Right ventricle myocardium superior (tissue), 1 donor: ENCODE measurements at regions of chr13 and their contacts with region 1.

Region 1: GRCh38 chr13:97109841-97110492 is 112.2 kb upstream of the MBNL2 start:
- DNase-seq: peak; percentile 95
- ATAC-seq: peak; percentile 98

Region 2: DNA sequence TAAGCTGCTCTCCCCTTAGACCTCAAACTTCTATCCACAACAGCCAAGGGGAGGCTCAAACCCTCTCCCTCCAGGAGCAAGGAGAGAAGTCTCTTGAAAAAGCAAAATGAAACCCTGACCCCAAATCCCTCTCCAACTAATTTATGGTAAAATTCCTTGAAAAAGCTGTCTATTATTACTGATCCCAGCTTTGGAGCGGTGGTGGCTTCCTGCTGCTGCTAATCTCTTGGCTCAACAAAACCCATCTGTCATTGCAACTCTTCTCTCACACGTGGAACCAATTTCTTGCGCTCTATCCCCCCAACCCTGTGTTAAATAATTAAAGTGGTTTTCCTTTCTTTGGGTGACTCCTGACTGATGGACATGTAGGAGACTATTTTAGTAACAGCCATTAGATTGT is 51.6 kb before region 1 on chr13:
- intact Hi-C with region 1: no loop called
- DNase-seq: no peak
- ATAC-seq: no peak

Region 3: DNA sequence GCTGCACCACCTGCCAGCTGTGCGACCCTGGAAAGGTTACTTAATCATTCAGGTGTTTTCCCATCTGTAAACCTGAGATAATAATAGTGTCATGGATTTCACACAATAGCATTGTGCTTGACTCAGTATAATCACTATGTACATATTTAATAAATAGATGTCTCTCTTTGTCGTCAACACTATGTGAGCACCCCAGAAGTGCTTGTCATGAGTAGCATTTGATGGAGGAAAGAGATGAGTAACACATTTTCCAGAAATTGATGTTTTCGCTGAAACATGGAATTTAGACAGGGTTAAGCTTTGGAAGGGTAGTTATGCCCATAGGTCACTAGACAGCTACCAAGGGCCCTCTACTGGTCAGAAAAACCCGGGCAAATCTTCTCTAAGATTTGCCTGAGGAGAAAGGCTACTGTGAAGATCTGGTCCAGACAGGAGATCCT is 102.7 kb after region 1 on chr13:
- intact Hi-C with region 1: loop called (anchors 2 kb)
- DNase-seq: no peak
- ATAC-seq: peak; percentile 87

Region 4: DNA sequence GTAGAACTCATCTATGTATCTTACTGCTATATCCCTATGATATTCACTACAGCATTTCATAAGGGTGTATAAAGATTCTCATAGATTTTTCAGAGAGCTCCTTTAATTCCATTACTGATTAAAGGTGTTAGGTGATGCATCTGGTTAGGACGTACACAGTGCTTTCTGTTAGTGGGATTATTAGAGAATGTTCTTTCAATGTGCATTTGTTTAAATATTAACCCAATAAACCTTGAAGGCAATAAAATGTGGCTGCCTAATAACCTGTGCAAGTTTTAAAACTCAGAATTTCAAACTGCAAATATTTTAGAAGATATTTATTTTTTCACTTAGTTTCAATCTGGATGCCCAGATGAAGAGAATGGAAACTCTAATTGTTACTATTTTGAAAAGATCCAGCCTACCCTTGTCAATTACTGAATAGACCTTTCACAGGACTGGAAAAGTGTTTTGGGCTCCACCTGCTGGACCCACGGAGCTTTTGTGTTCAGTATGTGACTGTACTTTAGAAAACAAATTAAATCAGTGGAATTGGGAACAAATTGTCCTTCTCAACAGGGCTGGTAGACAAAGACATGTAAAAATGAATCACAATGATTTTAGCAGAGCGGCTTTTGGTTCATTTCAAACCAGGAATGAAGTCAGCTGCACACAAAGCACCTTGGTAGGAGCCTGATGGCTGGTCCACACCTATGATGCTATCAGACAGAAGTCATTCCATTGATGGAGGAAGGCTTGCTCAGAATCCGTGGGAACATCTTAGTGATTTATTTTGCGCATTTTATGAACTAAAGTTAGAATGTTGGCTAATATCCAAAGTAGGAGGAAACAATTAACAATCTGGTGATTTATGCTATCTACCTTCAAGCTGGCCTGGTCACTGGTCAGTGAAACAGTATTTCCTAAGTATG is 234.6 kb after region 1 on chr13:
- intact Hi-C with region 1: loop called (anchors 5 kb)
- DNase-seq: peak; percentile 75
- ATAC-seq: peak; percentile 89

Region 5: GRCh38 chr13:97359181-97360057 is 249.5 kb after region 1 on chr13:
- intact Hi-C with region 1: loop called (anchors 5 kb)
- DNase-seq: no peak
- ATAC-seq: peak; percentile 92

Region 6: DNA sequence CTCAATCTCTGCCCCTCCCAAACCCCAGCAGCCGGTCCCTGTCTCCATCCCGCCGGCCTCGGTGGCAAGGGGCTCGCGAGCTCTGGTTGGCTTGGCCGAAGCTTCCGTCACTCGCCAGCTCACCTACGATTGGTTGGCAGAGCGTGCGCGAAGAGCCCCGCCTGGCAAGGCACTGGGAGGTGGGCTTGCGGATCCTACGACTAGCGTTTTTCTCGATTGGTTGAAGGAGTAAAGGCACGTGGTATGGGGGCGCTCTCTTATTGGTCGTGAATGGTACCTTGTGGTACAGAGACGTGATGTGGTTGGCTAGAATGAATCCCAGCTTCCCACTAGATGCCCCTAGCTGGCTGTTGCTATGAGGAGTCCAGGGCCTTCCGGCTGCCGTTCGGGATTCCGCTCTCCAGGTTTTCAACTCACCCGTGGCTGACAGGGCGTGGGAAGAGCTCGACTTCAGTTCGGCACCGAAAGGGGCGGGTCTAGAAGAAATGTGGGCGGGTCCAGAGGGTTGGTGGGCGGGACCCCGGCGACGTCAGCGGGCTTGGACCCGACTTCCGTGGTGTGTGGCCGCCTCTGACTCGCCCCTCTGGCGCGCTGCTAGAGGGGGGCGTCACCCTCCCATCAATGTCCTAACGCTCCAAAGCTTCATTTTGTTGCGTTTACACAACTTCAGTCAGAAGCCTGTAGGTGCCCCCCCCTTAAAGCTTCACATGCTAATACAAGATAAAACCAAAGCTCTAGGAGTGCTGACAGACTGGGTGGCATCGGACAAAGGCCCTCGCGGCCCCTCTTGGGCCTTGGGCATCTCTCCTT is 323.2 kb after region 1 on chr13:
- intact Hi-C with region 1: loop called (anchors 5 kb)
- DNase-seq: peak; percentile 98
- ATAC-seq: peak; percentile 95